SK-N-SH (cell line): ENCODE measurements at regions of chr11 and their contacts with region 1.

Region 1: GRCh38 chr11:7278314-7278917 is 26.7 kb downstream of the SYT9 start:
- DNase-seq: peak; percentile 37
- H3K4me3 ChIP-seq: no peak overlapping the region
- H3K27ac ChIP-seq: no peak overlapping the region
- H3K4me1 ChIP-seq: no peaks in the 10 kb centered on the region
- H3K27me3 ChIP-seq: no peaks in the 10 kb centered on the region
- CTCF ChIP-seq: peak; percentile 69
- EP300 ChIP-seq: no peak
- RAD21 ChIP-seq: peak; percentile 75

Region 2: GRCh38 chr11:7098235-7098832 is 180.1 kb before region 1 on chr11:
- CTCF ChIA-PET with region 1: interaction called, 39 read pairs
- POLR2A ChIA-PET with region 1: no interaction called
- DNase-seq: peak; percentile 55
- H3K4me3 ChIP-seq: peak overlapping the region in 1 of 2 experiments; percentile 16; a peak in 1 of 4 replicates
- H3K27ac ChIP-seq: no peak overlapping the region
- H3K4me1 ChIP-seq: no peaks in the 10 kb centered on the region
- H3K27me3 ChIP-seq: no peaks in the 10 kb centered on the region
- CTCF ChIP-seq: peak; percentile 77
- EP300 ChIP-seq: no peak
- RAD21 ChIP-seq: peak; percentile 94

Region 3: DNA sequence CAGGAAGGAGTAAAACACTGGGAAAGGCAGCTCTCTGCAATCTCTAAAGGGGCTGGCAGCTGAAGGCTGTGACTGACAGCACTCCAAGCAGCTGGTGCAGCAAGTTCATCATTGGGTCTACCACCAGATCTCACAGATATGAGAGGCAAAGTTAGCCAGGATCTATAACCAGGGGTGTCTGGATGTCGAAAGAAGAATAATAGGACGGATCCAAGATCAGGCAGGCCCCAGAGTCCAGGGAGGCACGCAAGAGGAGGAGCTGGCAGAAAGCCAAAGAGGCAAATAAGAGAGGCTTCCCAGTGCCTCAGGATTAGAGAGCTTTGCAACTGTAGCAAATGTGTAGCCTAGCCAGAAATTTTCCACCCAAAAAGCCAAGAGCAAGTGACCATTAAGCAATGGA is 112.5 kb before region 1 on chr11:
- CTCF ChIA-PET with region 1: interaction called, 10 read pairs
- POLR2A ChIA-PET with region 1: no interaction called
- DNase-seq: peak; percentile 20
- H3K4me3 ChIP-seq: no peak overlapping the region
- H3K27ac ChIP-seq: no peak overlapping the region
- H3K4me1 ChIP-seq: peaks cover 0 to 5% of the 10 kb centered on the region in 2 experiments; a peak in 1 of 4 replicates
- H3K27me3 ChIP-seq: no peaks in the 10 kb centered on the region
- CTCF ChIP-seq: no peak
- EP300 ChIP-seq: no peak
- RAD21 ChIP-seq: no peak

Region 4: GRCh38 chr11:7291100-7291829 is 12.8 kb after region 1 on chr11:
- CTCF ChIA-PET with region 1: interaction called, 20 read pairs
- POLR2A ChIA-PET with region 1: no interaction called
- DNase-seq: no peak
- H3K4me3 ChIP-seq: no peak overlapping the region
- H3K27ac ChIP-seq: no peak overlapping the region
- H3K4me1 ChIP-seq: no peaks in the 10 kb centered on the region
- H3K27me3 ChIP-seq: no peaks in the 10 kb centered on the region
- CTCF ChIP-seq: no peak
- EP300 ChIP-seq: no peak
- RAD21 ChIP-seq: no peak

Region 5: DNA sequence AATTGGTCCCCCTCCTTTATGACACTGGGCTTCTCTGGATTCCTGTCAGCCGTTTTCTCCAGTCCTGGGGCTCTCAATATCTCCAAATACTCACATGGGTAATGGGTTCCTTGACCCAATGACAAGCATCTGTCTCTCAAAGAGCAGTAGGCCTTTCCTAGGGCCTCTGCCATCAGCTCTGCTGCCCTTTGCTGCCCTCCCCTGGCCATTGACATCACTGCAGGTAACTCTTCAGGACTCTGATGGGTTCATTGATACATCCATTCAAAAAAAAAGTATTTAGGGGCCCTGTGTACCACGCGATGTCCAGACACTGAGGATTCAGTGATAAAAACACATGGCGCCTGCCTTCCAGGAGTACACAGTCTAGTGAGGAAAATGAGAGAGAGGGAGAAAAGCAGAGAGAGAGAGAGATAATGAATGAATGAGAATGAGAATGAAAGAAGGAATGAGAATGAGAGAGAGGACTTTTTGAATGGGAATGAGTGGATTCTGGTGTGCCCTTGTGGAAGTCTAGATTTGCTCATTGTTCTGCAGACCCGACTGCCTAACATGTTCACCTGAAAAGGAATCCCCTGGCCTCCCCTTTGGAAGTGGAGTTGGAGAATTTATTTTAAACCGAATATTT is 164.3 kb after region 1 on chr11:
- CTCF ChIA-PET with region 1: interaction called, 35 read pairs
- POLR2A ChIA-PET with region 1: no interaction called
- DNase-seq: peak; percentile 67
- H3K4me3 ChIP-seq: peak overlapping the region in 1 of 2 experiments; percentile 19; a peak in 1 of 4 replicates
- H3K27ac ChIP-seq: no peak overlapping the region
- H3K4me1 ChIP-seq: no peaks in the 10 kb centered on the region
- H3K27me3 ChIP-seq: no peaks in the 10 kb centered on the region
- CTCF ChIP-seq: peak; percentile 87
- EP300 ChIP-seq: no peak
- RAD21 ChIP-seq: peak; percentile 94

Region 6: GRCh38 chr11:7612661-7613393 is 334.4 kb after region 1 on chr11:
- CTCF ChIA-PET with region 1: no interaction called
- POLR2A ChIA-PET with region 1: no interaction called
- DNase-seq: no peak
- H3K4me3 ChIP-seq: no peak overlapping the region
- H3K27ac ChIP-seq: no peak overlapping the region
- H3K4me1 ChIP-seq: peaks cover 0 to 12% of the 10 kb centered on the region in 2 experiments; a peak in 2 of 4 replicates
- H3K27me3 ChIP-seq: no peaks in the 10 kb centered on the region
- CTCF ChIP-seq: no peak
- EP300 ChIP-seq: no peak
- RAD21 ChIP-seq: no peak

Region 7: DNA sequence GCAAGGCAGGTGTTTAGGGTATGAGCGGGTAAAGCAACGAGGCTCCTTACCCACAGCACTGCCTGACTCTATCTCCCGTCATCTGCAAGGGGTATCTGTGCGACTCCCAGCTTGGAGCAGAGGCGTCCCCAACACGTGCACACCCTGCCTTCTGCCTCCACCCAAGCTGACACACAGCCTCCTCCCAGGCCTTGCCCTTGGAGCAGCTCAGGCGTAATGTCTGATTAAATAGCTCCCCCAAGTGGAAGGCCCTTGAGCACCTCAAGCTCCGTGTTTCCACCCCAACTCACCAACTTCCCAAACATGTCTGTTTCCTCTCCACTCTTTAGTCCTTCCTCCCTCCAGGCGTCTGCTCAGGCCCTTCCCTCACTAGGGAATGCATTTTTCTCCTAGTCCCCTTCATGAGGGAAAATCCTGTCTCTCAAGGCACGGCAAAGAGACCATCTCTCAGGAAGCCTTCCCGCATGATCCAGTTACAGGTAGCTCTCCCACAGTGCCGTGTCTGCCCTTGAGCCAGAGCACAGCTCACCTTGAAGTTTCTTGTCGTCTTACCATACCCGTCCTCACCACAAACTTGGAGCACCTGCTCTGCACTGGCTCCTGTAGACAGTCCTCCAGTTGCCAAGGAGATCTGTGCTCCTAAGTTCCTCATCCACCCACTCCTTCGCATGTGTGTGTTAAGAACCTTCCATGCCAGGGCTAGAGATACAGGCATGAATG is 379.1 kb after region 1 on chr11:
- CTCF ChIA-PET with region 1: interaction called, 11 read pairs
- POLR2A ChIA-PET with region 1: no interaction called
- DNase-seq: peak; percentile 68
- H3K4me3 ChIP-seq: no peak overlapping the region
- H3K27ac ChIP-seq: no peak overlapping the region
- H3K4me1 ChIP-seq: peaks cover 0 to 40% of the 10 kb centered on the region in 2 experiments; a peak in 1 of 4 replicates
- H3K27me3 ChIP-seq: no peaks in the 10 kb centered on the region
- CTCF ChIP-seq: peak; percentile 56
- EP300 ChIP-seq: no peak
- RAD21 ChIP-seq: peak; percentile 86